ENCODE measurements at regions of chr15 and their contacts with region 1.

Region 1: GRCh38 chr15:64825431-64826294 is at the start of gene PIF1:
- H3K4me3 ChIP-seq: peak within 1 kb of the TSS; percentile 67
- H3K27ac ChIP-seq: peak within 1 kb of the TSS; percentile 61
- H3K4me1 ChIP-seq: no peaks in the 10 kb centered on the region; the same call in 1 of the 2 replicates
- CTCF ChIP-seq: no peak

Region 2: GRCh38 chr15:64717735-64718495 is 107.7 kb before region 1 on chr15:
- CTCF ChIA-PET with region 1: no interaction called
- POLR2A ChIA-PET with region 1: no interaction called
- H3K4me3 ChIP-seq: no peak overlapping the region
- H3K27ac ChIP-seq: no peak overlapping the region
- H3K4me1 ChIP-seq: no peaks in the 10 kb centered on the region
- CTCF ChIP-seq: no peak

Region 3: GRCh38 chr15:64809649-64810496 is 15.8 kb before region 1 on chr15:
- CTCF ChIA-PET with region 1: interaction called, 13 read pairs
- POLR2A ChIA-PET with region 1: interaction called, 5 read pairs
- H3K4me3 ChIP-seq: no peak overlapping the region
- H3K27ac ChIP-seq: no peak overlapping the region
- H3K4me1 ChIP-seq: no peaks in the 10 kb centered on the region
- CTCF ChIP-seq: 0 out of 2 replicates have a peak, but pooled peaks have one; percentile 56

Region 4: GRCh38 chr15:64841258-64842095 is 15.8 kb after region 1 on chr15 and contains the start of gene PLEKHO2:
- CTCF ChIA-PET with region 1: no interaction called
- POLR2A ChIA-PET with region 1: interaction called, 16 read pairs
- H3K4me3 ChIP-seq: peak within 1 kb of the TSS; percentile 65
- H3K27ac ChIP-seq: peak within 1 kb of the TSS; percentile 16; the same call in 1 of the 2 replicates
- H3K4me1 ChIP-seq: no peaks in the 10 kb centered on the region
- CTCF ChIP-seq: 0 out of 2 replicates have a peak, but pooled peaks have one; percentile 55